Gastrocnemius medialis (tissue), 4 donors: ENCODE measurements at regions of chr17 and their contacts with region 1.

Region 1: GRCh38 chr17:17812211-17813057 is 24.4 kb downstream of the SREBF1 start:
- DNase-seq: peak; percentile 49 to 70
- ATAC-seq: peak; percentile 50 to 61
- H3K4me3 ChIP-seq: no peak overlapping the region
- H3K27ac ChIP-seq: peak overlapping the region; percentile 2 to 88 (median 46)
- H3K4me1 ChIP-seq: peaks cover 32% of the 10 kb centered on the region in 2 donors
- H3K27me3 ChIP-seq: no peaks in the 10 kb centered on the region
- CTCF ChIP-seq: peak; percentile 98 to 100 (median 100)
- POLR2A ChIP-seq: no peak

Region 2: GRCh38 chr17:17844500-17844899 is 32.1 kb after region 1 on chr17:
- in situ Hi-C with region 1: no loop called
- intact Hi-C with region 1: loop called (anchors 1 kb)
- DNase-seq: no peak
- ATAC-seq: no peak
- H3K4me3 ChIP-seq: no peak overlapping the region
- H3K27ac ChIP-seq: peak overlapping the region; percentile 33 to 100 (median 88)
- H3K4me1 ChIP-seq: peaks cover 38 to 61% of the 10 kb centered on the region in 2 donors
- H3K27me3 ChIP-seq: no peaks in the 10 kb centered on the region
- CTCF ChIP-seq: peak in 3 of 5 experiments; percentile 45 to 54 (median 46)
- POLR2A ChIP-seq: no peak

Region 3: GRCh38 chr17:18033442-18034099 is 221.1 kb after region 1 on chr17:
- in situ Hi-C with region 1: no loop called
- intact Hi-C with region 1: loop called (anchors 5 kb)
- DNase-seq: peak; percentile 42 to 44
- ATAC-seq: peak; percentile 92 to 98
- H3K4me3 ChIP-seq: no peak overlapping the region
- H3K27ac ChIP-seq: peak overlapping the region; percentile 9 to 53 (median 45)
- H3K4me1 ChIP-seq: peaks cover 28 to 33% of the 10 kb centered on the region in 2 donors
- H3K27me3 ChIP-seq: no peaks in the 10 kb centered on the region
- CTCF ChIP-seq: peak; percentile 66 to 69 (median 67)
- POLR2A ChIP-seq: no peak